ENCODE measurements at regions of chr16 and their contacts with region 1.

Region 1: GRCh38 chr16:49491771-49492761 is 118.5 kb downstream of the C16orf78 start:
- DNase-seq: peak in 7 of 9 experiments; percentile 21 to 64 (median 54)
- ATAC-seq: peak; percentile 78
- H3K4me3 ChIP-seq: no peak overlapping the region
- H3K4me3 Mint-ChIP-seq: no peak overlapping the region
- H3K27ac ChIP-seq: no peak overlapping the region
- H3K27ac Mint-ChIP-seq: no peak overlapping the region
- H3K4me1 ChIP-seq: no peaks in the 10 kb centered on the region
- H3K4me1 Mint-ChIP-seq: peaks cover 2% of the 10 kb centered on the region
- H3K27me3 ChIP-seq: no peaks in the 10 kb centered on the region
- H3K27me3 Mint-ChIP-seq: no peaks in the 10 kb centered on the region
- CTCF ChIP-seq: peak; percentile 83

Region 2: GRCh38 chr16:49463529-49463928 is 28.5 kb before region 1 on chr16:
- CTCF ChIA-PET with region 1: interaction called, 4 read pairs
- POLR2A ChIA-PET with region 1: no interaction called
- intact Hi-C with region 1: loop called in 1 of 2 experiments (anchors 1 kb)
- DNase-seq: peak; percentile 55 to 90 (median 75)
- ATAC-seq: peak; percentile 83
- H3K4me3 ChIP-seq: peak overlapping the region in 1 of 2 experiments; percentile 10
- H3K4me3 Mint-ChIP-seq: peak overlapping the region; percentile 32
- H3K27ac ChIP-seq: peak overlapping the region; percentile 34 to 44
- H3K27ac Mint-ChIP-seq: peak overlapping the region; percentile 94
- H3K4me1 ChIP-seq: peaks cover 52% of the 10 kb centered on the region
- H3K4me1 Mint-ChIP-seq: peaks cover 51% of the 10 kb centered on the region
- H3K27me3 ChIP-seq: no peaks in the 10 kb centered on the region
- H3K27me3 Mint-ChIP-seq: no peaks in the 10 kb centered on the region
- CTCF ChIP-seq: no peak

Region 3: DNA sequence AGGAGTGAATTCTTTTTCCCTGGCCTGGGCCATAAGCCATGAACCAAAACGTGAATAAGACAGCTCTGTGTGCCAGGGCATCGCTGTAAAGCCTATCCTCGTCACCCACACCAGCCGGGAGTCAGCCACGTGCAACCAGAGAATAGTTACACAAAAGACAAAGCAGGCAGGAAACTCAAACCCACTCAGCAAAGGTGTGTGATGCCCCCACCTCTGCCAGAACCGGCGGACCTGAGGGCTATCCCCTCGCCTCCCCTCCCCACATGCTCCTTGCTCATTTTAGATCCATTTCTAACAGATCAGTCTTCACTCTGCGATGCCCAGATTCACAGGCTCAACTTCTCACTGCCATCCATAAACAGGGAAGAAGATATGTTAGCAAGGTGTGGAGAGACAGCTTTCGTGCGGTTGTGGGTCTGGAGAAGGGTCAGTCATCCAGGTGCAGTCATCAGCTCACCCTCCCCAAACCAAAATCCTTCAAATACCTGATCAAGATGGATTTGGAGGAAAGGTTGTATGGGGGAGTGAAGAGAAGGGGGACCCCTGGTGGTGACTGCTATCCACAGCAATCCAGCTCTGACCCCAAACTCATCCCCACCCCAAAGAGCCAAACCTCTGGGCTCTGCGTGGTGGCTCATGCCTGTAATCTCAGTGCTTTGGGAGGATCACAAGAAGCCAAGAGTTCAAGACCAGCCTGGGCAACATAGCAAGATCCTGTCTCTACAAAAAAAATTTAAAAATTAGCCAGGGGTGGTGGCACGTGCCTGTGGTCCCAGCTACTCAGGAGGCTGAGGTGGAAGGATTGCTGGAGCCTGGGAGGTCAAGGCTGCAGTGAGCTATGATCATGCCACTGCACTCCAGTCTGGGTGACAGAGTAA is 100.7 kb after region 1 on chr16:
- CTCF ChIA-PET with region 1: interaction called, 3 read pairs
- POLR2A ChIA-PET with region 1: no interaction called
- intact Hi-C with region 1: loop called (anchors 1 to 5 kb)
- DNase-seq: peak; percentile 5 to 69 (median 42)
- ATAC-seq: peak; percentile 59
- H3K4me3 ChIP-seq: no peak overlapping the region
- H3K4me3 Mint-ChIP-seq: no peak overlapping the region
- H3K27ac ChIP-seq: no peak overlapping the region
- H3K27ac Mint-ChIP-seq: no peak overlapping the region
- H3K4me1 ChIP-seq: no peaks in the 10 kb centered on the region
- H3K4me1 Mint-ChIP-seq: peaks cover 12% of the 10 kb centered on the region
- H3K27me3 ChIP-seq: no peaks in the 10 kb centered on the region
- H3K27me3 Mint-ChIP-seq: peaks cover 7% of the 10 kb centered on the region
- CTCF ChIP-seq: peak; percentile 67

Region 4: DNA sequence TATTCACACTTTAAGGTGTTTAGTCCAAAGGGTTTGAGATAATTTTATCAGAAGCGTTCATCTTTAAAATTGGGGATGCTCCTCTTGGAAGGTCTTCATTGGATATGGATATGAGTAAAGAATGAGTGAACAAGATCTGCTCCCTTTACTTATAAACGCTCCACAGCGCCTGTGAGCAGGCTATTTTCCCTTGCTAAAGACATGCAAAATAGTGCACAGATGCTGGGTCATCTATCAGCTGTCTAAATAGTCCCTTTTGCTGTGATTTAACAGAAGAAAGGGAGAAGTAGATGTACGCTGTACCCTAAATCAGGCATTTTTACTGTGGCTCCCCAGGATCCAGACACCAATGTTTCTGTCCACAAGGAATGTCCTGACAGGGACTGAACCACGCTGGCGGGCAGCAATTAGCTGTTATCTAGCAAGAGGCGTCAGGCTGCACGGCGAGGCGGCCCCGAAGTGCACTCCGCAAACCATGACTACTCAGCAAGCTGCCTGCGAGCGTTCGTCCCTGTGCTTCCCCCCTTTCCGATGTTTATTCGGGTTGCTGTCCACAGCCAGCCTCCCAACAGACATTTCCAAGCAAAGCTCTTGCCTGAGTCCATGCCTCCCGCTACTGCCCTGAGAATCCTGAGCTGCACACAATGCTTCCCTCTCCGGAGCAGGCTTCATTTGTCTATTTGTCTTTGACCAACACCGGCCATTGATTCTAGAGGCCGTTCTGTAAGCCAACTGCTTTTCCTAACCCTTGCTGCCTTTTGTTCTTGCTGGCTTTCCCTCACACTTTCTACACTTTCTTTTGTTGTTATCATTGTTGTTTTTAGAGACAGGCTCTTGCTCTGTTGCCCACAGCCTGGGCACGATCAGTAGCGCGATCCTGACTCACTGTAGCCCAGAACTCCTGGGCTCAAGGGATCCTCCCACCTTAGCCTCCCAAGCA is 477.3 kb after region 1 on chr16:
- CTCF ChIA-PET with region 1: no interaction called
- POLR2A ChIA-PET with region 1: no interaction called
- intact Hi-C with region 1: no loop called
- DNase-seq: no peak
- ATAC-seq: no peak
- H3K4me3 ChIP-seq: no peak overlapping the region
- H3K4me3 Mint-ChIP-seq: no peak overlapping the region
- H3K27ac ChIP-seq: no peak overlapping the region
- H3K27ac Mint-ChIP-seq: no peak overlapping the region
- H3K4me1 ChIP-seq: no peaks in the 10 kb centered on the region
- H3K4me1 Mint-ChIP-seq: no peaks in the 10 kb centered on the region
- H3K27me3 ChIP-seq: no peaks in the 10 kb centered on the region
- H3K27me3 Mint-ChIP-seq: peaks cover 40% of the 10 kb centered on the region
- CTCF ChIP-seq: no peak